ENCODE measurements at regions of chr13 and their contacts with region 1.

Region 1: DNA sequence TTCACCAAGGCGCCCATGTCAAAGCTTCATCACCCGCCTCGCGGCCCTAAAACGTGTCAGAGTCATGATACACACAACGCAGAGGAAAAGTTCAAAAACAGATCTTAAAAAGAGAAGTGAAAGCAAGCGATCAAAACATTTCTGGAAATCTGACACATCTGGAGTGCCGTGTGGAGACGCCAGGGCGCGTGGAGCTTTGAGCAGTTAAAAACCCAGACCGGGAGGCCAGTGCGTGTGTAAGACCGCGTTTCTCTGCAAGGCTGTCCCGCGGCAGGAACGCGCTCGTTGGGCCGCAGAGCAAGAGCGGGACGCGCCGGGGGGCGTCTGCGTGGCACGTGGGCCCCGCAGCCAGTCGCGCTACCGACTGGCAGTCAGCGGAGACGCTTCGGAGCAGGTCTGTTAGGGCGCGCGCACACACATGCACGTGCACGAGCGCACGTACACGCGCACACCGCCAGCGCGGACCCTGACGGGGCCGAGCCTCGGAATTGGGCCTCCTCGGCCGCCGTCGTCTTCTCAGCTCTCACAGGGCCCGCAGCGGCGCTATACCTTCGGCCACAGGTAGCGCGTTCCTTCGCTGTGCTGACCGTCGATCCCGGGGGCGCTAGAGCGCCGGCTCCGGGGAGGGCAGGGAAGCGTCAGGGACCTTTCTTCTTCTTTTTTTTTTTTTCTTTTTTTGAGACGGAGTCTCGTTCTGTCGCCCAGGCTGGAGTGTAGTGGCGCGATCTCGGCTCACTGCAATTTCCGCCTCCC is 35.8 kb downstream of the RNF6 start:
- DNase-seq: peak; percentile 92
- ATAC-seq: peak; percentile 96
- H3K4me3 Mint-ChIP-seq: peak overlapping the region; percentile 84
- H3K27ac Mint-ChIP-seq: peak overlapping the region; percentile 91
- H3K4me1 Mint-ChIP-seq: peaks cover 30% of the 10 kb centered on the region
- H3K27me3 Mint-ChIP-seq: no peaks in the 10 kb centered on the region

Region 2: DNA sequence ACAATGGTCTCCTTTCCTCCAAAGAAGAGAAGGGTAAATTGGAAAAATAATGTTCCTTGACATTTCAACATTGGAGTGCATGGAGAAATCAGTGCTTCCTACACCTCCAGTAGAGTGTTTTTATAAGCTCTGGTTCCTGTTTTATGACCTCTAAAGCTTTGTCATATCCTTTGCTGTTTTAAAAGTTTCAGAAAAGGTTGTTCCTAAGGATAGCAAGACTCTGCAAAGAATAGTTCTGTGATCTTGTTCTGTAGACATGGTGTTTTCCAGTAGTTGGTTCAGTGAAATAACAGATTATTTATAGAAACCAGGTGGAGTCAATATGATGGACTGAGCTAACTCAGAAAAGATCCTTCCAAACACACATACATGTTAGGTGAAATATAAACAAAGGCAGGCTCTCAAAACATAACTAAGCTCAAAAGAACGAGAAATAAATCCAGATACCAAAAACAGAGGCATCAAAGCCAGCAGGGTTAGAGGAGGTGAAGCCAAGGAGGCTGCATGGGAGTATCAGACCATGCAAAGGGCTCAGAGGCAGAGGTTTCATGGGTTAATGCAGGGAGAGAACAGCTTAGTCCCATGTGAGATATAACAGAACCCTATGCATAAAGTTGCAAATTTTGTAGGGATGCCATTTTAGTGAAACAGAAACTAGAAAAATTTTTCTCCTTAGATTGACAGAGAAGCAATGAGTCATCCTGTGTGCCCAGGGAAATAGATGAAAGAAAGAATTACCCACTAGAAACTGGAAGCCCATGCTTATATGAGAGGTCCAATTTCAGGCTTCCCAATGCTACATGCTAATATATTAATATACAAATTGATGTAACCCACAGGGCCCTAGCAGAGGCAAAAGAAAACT is 178.8 kb before region 1 on chr13:
- CTCF ChIA-PET with region 1: no interaction called
- POLR2A ChIA-PET with region 1: no interaction called
- DNase-seq: no peak
- ATAC-seq: no peak
- H3K4me3 Mint-ChIP-seq: no peak overlapping the region
- H3K27ac Mint-ChIP-seq: no peak overlapping the region
- H3K4me1 Mint-ChIP-seq: peaks cover 14% of the 10 kb centered on the region
- H3K27me3 Mint-ChIP-seq: no peaks in the 10 kb centered on the region

Region 3: GRCh38 chr13:26202365-26202972 is 16.2 kb after region 1 on chr13:
- CTCF ChIA-PET with region 1: interaction called, 10 read pairs
- POLR2A ChIA-PET with region 1: no interaction called
- DNase-seq: no peak
- ATAC-seq: no peak
- H3K4me3 Mint-ChIP-seq: no peak overlapping the region
- H3K27ac Mint-ChIP-seq: no peak overlapping the region
- H3K4me1 Mint-ChIP-seq: no peaks in the 10 kb centered on the region
- H3K27me3 Mint-ChIP-seq: no peaks in the 10 kb centered on the region

Region 4: DNA sequence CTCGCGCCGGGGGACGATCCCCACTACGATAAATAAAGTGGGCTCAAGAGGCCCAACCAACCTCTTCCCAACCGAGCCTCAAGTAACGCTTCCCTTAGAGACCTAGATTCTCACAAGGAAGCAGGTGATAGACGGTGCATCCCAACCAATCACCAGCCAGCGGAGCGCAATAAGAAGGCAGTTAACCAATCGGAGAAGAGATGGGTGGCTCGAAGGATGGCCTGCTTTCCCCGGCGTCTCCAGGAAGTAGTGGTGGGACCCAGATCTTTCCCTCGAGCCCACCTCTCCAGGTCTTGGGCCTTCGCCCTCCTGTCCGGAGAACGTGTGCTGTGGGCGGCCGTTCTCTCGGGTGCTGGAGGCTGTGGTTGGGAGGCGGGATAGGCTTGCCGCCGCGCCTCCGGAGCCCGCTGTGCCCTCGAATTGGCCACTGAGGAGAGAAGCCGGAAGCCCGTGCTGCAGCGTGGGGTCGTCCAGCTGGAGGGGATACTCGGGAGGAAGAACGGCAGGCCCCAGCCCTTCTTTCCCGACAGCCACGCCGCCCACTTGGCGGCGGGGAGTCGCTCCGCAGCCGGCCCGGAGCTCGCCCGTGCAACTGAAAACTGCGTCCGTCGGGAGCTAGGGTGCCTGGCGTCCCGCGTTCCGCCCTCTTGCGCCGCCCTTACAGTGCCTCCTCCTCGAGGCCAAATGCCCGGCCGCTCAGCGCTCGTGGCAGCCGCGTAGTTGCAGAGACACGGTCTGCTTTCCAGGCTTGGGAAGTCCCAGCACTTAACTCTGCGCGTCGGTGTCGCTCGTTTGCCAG is 35.6 kb after region 1 on chr13 and contains the start of gene RNF6:
- CTCF ChIA-PET with region 1: interaction called, 59 read pairs
- POLR2A ChIA-PET with region 1: interaction called, 19 read pairs
- DNase-seq: peak; percentile 93
- ATAC-seq: peak; percentile 98
- H3K4me3 Mint-ChIP-seq: peak within 1 kb of the TSS; percentile 97
- H3K27ac Mint-ChIP-seq: peak within 1 kb of the TSS; percentile 100
- H3K4me1 Mint-ChIP-seq: peaks cover 36% of the 10 kb centered on the region
- H3K27me3 Mint-ChIP-seq: peaks cover 8% of the 10 kb centered on the region
- total RNA-seq, gene RNF6: 34.2 to 35.7 TPM

Region 5: GRCh38 chr13:26340807-26341206 is 154.5 kb after region 1 on chr13:
- CTCF ChIA-PET with region 1: no interaction called
- POLR2A ChIA-PET with region 1: no interaction called
- DNase-seq: no peak
- ATAC-seq: no peak
- H3K4me3 Mint-ChIP-seq: no peak overlapping the region
- H3K27ac Mint-ChIP-seq: no peak overlapping the region
- H3K4me1 Mint-ChIP-seq: peaks cover 3% of the 10 kb centered on the region
- H3K27me3 Mint-ChIP-seq: no peaks in the 10 kb centered on the region

Region 6: GRCh38 chr13:26482451-26483197 is 296.3 kb after region 1 on chr13:
- CTCF ChIA-PET with region 1: interaction called, 23 read pairs
- POLR2A ChIA-PET with region 1: no interaction called
- DNase-seq: peak; percentile 77
- ATAC-seq: peak; percentile 91
- H3K4me3 Mint-ChIP-seq: no peak overlapping the region
- H3K27ac Mint-ChIP-seq: peak overlapping the region; percentile 49
- H3K4me1 Mint-ChIP-seq: peaks cover 14% of the 10 kb centered on the region
- H3K27me3 Mint-ChIP-seq: no peaks in the 10 kb centered on the region

Region 7: DNA sequence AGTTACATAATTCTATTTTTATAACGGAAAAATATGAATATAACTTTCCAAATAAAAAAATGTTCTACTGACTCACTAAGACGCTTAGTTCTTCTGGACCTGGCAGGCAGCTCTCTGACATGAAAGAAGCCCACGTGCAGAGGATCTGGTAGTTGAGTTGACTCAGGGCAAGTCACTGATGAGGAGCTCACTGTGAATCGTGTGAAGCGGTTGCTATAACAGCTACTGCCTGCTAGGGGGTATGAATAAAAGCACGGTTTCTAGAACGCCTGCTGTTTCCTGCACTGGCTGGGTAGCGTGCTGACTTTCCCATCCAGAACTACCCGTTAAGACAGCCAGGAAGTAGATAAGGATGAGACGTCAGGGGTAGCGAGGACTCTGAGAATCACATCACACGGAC is 316.5 kb after region 1 on chr13:
- CTCF ChIA-PET with region 1: interaction called, 166 read pairs
- POLR2A ChIA-PET with region 1: no interaction called
- DNase-seq: peak; percentile 20
- ATAC-seq: peak; percentile 39
- H3K4me3 Mint-ChIP-seq: no peak overlapping the region
- H3K27ac Mint-ChIP-seq: no peak overlapping the region
- H3K4me1 Mint-ChIP-seq: no peaks in the 10 kb centered on the region
- H3K27me3 Mint-ChIP-seq: no peaks in the 10 kb centered on the region

Region 8: GRCh38 chr13:26707122-26708006 is 521.1 kb after region 1 on chr13:
- CTCF ChIA-PET with region 1: interaction called, 22 read pairs
- POLR2A ChIA-PET with region 1: no interaction called
- DNase-seq: peak; percentile 74
- ATAC-seq: peak; percentile 78
- H3K4me3 Mint-ChIP-seq: no peak overlapping the region
- H3K27ac Mint-ChIP-seq: no peak overlapping the region
- H3K4me1 Mint-ChIP-seq: peaks cover 6% of the 10 kb centered on the region
- H3K27me3 Mint-ChIP-seq: peaks cover 2% of the 10 kb centered on the region

Region 9: DNA sequence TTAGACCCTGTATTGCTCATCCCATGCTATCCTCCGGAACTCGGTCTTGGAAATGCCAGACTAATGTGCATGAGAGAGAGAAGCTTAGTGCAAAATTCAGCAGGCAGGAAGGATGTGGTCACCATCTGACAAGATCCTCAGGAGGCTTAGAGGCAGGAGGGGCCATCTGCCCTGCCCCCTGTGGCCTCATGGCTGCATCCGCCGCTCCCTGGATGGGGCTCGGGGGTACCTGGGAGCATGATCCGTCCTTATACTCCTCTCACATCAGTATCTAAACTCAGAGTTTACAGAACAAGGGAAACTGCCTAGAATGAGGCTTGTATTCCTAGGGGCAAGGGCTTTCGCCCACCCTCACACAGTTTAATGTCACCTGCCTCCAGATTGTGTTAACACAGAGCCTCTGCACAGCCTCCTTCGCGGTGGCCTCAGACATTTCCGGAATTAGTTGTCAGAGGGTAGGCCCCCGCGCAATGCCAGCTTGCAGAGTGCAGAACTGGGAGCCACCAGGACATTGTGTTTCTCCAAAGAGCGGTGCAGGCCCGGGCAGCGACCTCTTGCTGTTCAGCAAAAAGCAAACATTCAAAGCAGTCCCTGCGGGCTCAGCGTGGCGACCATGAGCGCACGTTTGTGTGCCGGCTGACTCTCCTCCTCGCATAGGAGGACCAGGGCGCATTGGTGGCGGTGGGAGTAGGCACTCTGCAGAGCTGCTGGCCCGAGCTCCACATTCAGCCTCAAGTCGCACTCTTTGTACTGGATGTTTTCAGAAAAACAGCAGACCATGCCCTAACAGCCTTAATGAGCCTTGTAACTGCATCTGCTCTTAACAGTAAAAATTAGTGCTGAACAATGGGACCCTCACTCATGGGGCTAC is 535.2 kb after region 1 on chr13:
- CTCF ChIA-PET with region 1: interaction called, 16 read pairs
- POLR2A ChIA-PET with region 1: no interaction called
- DNase-seq: peak; percentile 77
- ATAC-seq: peak; percentile 90
- H3K4me3 Mint-ChIP-seq: peak overlapping the region; percentile 70
- H3K27ac Mint-ChIP-seq: peak overlapping the region; percentile 93
- H3K4me1 Mint-ChIP-seq: peaks cover 30% of the 10 kb centered on the region
- H3K27me3 Mint-ChIP-seq: no peaks in the 10 kb centered on the region

Measured in activated CD8-positive, alpha-beta T cell treated with anti-CD3 and anti-CD28 coated beads, Interleukin-2, amount 10 ng/mL, durations not matched to agents 7 days and 5 days (primary cell).